AG04450 (cell line): ENCODE measurements at regions of chr16 and their contacts with region 1.

Region 1: DNA sequence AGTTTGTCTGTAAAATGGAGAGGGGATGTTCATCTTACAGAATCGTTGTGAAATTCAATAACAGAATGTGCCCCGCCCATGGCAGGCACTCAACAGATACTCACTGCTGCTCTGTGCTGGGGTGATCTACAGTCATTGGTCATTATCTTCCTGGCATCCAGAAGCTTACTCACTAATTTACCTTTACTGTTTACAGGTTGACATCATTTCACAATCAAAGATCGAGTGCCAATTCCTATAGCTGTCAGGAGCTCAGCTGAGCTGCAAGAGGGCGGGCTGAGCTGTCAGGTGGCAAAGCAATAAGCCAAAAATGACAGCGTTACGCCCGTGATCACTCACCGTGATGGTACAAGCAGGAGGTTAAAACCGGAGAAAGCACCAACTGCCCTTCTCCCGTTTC is 51.2 kb downstream of the LITAF start:
- DNase-seq: no peak
- H3K4me3 ChIP-seq: no peak overlapping the region
- H3K27ac ChIP-seq: no peak overlapping the region
- H3K27me3 ChIP-seq: no peaks in the 10 kb centered on the region
- CTCF ChIP-seq: no peak

Region 2: DNA sequence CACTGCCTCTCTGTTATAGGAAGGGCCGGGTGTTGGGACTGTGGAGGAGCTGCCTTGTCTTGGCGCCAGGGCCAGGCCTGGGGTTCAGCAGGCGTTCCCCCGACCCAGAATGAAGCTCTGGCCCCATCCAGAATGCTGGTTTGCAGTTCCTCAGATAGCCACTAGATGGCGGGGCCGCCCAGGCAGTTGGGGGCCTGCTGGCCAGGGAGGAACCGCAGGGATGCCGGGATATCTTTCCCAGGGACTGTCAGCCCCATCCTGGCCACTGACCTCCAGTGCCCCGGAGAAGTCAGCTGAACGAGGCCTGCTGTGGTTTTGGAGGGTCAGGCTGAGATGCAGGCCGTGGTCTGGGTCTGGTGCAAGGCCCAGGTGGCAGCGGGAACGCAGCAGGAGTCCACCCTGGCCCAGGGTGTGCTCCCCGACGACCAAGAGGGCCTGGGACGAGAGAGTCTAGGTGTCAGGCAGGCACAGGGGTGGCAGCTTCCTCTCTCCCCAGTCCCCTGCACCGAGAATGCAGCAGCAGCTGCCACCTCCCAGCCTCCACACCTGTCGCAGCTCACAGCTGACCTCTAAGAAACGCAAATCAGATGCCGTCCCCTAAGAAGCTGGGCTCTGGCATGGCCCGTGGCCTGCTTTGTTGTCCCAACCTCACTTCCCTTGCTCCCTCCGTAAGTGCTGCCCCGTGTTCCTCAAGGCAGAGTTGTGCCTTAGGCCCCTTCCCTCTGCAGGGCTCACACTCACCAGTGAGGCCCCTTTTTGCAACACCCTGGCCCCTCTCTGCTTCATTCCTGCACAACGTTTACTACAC is 139.0 kb before region 1 on chr16:
- CTCF ChIA-PET with region 1: interaction called, 10 read pairs
- POLR2A ChIA-PET with region 1: no interaction called
- DNase-seq: peak; percentile 27
- H3K4me3 ChIP-seq: no peak overlapping the region
- H3K27ac ChIP-seq: no peak overlapping the region
- H3K27me3 ChIP-seq: no peaks in the 10 kb centered on the region
- CTCF ChIP-seq: peak; percentile 98

Region 3: GRCh38 chr16:11524098-11524750 is 11.2 kb before region 1 on chr16:
- CTCF ChIA-PET with region 1: interaction called, 17 read pairs
- POLR2A ChIA-PET with region 1: no interaction called
- DNase-seq: no peak
- H3K4me3 ChIP-seq: no peak overlapping the region
- H3K27ac ChIP-seq: no peak overlapping the region
- H3K27me3 ChIP-seq: peaks cover 18% of the 10 kb centered on the region
- CTCF ChIP-seq: no peak

Region 4: DNA sequence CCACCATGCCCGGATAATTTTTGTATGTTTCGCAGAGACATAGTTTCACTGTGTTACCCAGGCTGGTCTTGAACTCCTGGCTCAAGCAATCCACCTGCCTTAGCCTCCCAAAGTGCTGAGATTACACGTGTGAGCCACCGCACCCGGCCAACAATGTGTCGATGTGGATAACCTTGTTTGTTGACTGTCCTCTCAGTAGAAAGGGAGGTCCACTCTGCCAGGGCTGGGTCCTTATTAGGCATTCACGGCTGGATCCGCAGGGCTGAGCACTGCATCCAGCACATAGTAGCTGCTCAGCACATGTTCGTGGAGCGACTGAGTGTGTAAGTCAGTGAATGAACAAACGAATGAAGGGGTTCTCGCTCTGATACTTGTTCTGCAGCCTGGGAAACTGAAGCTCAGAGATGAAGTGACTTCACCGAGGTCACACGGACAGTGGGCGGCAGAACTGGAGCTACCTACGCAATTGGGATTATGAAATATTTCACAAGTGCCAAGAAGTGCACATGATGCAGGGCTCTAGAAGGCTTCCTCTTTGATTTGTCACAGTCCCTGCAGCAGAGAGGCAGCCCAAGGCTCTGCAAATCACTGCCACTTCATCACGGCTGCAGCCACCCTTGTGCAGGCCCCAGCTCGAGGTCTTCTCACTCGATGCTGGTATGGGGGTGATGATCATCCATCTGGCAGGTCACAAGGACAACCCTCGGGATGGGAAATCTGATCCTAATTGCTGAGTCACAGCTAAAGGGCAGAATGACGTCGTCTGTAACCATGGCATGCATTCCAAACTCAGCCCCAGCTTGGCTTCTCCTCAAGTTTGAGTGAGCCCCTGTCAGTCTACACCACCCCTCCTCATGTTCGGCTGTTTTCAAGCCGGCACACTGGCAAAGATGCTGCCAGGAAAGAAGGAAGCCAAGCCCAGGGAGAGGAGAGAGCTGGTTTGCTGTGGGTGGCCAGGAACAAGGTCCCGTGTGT is 104.7 kb after region 1 on chr16:
- CTCF ChIA-PET with region 1: interaction called, 55 read pairs
- POLR2A ChIA-PET with region 1: interaction called, 8 read pairs
- DNase-seq: peak; percentile 99
- H3K4me3 ChIP-seq: 0 out of 2 replicates have a peak overlapping the region, but pooled peaks have one; percentile 17
- H3K27ac ChIP-seq: peak overlapping the region; percentile 100
- H3K27me3 ChIP-seq: no peaks in the 10 kb centered on the region
- CTCF ChIP-seq: no peak

Region 5: DNA sequence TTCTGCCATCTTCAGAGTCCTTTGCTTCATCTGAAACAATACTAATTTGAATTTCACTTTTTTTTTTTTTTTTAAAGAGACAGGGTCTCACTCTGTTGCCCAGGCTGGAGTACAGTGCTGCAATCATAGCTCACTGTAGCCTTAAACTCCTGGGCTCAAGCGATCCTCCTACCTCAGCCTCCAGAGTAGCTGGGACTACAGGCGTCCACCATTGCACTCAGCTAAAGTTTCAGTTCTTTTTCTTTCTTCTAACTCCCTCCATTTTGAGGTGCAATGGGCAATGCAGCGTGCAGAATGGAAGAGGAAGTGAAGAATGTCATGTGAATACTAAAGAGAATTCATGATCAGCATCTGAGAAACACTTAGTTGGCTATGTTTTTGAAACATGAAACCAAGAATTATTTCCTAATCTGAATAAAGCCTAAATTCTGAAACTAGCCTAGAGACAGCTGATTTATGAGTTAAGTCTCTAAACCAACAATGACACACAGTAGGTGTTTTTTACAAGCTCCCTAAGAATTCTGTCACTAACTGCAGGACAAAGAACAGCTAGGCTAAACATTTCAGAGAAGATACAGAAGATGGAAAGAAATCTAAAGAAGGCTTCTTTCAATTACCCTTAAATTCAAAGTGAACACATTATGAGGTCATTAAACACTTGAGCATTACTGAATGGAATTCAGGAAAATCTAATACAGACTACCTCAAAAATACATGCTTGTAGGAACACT is 153.7 kb after region 1 on chr16:
- CTCF ChIA-PET with region 1: interaction called, 18 read pairs
- POLR2A ChIA-PET with region 1: no interaction called
- DNase-seq: no peak
- H3K4me3 ChIP-seq: no peak overlapping the region
- H3K27ac ChIP-seq: no peak overlapping the region
- H3K27me3 ChIP-seq: no peaks in the 10 kb centered on the region
- CTCF ChIP-seq: no peak

Region 6: DNA sequence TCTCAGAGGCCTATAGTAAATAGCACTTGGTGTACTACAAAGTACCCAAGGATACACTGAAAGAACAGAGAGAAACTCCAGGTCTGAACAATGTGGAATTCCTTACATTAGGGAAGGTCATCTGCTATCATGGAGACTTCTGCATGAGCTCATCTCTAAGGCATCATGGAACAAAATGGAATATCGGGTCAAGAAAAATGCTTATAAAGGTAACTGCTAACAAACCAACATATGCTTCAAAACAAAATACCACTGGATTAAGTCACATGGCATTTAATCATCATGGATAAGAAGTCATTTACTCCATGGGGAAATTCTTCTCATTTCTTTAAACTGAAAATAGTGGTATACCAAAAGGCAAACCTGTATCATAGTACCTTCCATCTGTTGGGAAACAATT is 172.9 kb after region 1 on chr16:
- CTCF ChIA-PET with region 1: interaction called, 13 read pairs
- POLR2A ChIA-PET with region 1: no interaction called
- DNase-seq: no peak
- H3K4me3 ChIP-seq: no peak overlapping the region
- H3K27ac ChIP-seq: no peak overlapping the region
- H3K27me3 ChIP-seq: no peaks in the 10 kb centered on the region
- CTCF ChIP-seq: no peak

Region 7: DNA sequence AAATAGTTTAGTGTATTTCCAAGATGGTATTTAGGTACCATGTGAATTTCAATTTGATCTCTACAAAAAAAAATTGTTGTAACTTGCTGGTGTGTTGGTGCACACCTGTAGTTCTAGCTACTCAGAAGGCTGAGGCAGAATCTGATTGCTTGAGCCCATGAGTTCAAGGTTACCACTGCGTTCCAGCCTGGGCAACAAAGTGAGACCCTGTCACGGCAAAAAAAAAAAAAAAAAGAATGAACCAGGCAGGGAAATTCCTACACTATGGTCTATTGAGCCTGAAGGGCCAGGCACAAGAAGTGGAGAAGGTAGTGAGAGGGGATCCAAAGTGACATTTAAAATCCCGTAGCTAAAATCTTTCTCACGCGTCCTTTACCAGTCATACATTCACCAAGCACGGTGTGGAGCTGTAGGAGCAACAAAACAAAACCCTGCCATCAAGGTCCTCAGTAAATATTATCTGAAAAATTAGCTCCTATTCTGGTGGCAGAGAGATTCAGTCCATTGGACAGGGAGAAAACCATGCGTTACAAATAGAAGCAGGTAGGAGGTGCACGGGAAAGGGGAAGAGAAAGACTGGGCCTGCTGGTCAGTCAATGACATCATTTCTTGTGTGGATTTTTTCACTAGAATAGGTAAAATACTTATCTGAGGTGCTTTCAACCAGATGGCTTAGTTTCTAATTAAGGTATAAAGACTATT is 179.9 kb after region 1 on chr16:
- CTCF ChIA-PET with region 1: interaction called, 13 read pairs
- POLR2A ChIA-PET with region 1: no interaction called
- DNase-seq: no peak
- H3K4me3 ChIP-seq: no peak overlapping the region
- H3K27ac ChIP-seq: no peak overlapping the region
- H3K27me3 ChIP-seq: no peaks in the 10 kb centered on the region
- CTCF ChIP-seq: no peak